Heart left ventricle (tissue), 16 donors: ENCODE measurements at regions of chr11 and their contacts with region 1.

Region 1: GRCh38 chr11:31943056-31943780 is 132.1 kb upstream of the PAX6 start:
- DNase-seq: no peak
- ATAC-seq: no peak
- H3K4me3 ChIP-seq: no peak overlapping the region
- H3K27ac ChIP-seq: no peak overlapping the region
- H3K4me1 ChIP-seq: peaks cover 0 to 13% (median 1%) of the 10 kb centered on the region in 12 donors
- H3K27me3 ChIP-seq: no peaks in the 10 kb centered on the region
- CTCF ChIP-seq: no peak
- POLR2A ChIP-seq: no peak

Region 2: GRCh38 chr11:31798554-31799434 is 144.4 kb before region 1 on chr11:
- intact Hi-C with region 1: loop called in 1 of 10 experiments (anchors 5 kb)
- DNase-seq: peak in 2 of 5 donors; percentile 16 to 42
- ATAC-seq: no peak
- H3K4me3 ChIP-seq: peak overlapping the region in 1 of 12 donors; percentile 22
- H3K27ac ChIP-seq: no peak overlapping the region
- H3K4me1 ChIP-seq: peaks cover 0 to 35% (median 12%) of the 10 kb centered on the region in 12 donors
- H3K27me3 ChIP-seq: peaks cover 65 to 94% (median 86%) of the 10 kb centered on the region in 9 donors
- CTCF ChIP-seq: peak in 2 of 12 donors; percentile 23 to 25
- POLR2A ChIP-seq: no peak

Region 3: GRCh38 chr11:31903225-31904074 is 39.8 kb before region 1 on chr11:
- intact Hi-C with region 1: loop called in 1 of 10 experiments (anchors 1 kb)
- DNase-seq: peak in 4 of 5 donors; percentile 36 to 80 (median 49)
- ATAC-seq: peak; percentile 88 to 93 (median 91)
- H3K4me3 ChIP-seq: no peak overlapping the region
- H3K27ac ChIP-seq: peak overlapping the region; percentile 28 to 93 (median 80)
- H3K4me1 ChIP-seq: peaks cover 0 to 12% (median 0%) of the 10 kb centered on the region in 12 donors
- H3K27me3 ChIP-seq: no peaks in the 10 kb centered on the region
- CTCF ChIP-seq: no peak
- POLR2A ChIP-seq: no peak

Region 4: DNA sequence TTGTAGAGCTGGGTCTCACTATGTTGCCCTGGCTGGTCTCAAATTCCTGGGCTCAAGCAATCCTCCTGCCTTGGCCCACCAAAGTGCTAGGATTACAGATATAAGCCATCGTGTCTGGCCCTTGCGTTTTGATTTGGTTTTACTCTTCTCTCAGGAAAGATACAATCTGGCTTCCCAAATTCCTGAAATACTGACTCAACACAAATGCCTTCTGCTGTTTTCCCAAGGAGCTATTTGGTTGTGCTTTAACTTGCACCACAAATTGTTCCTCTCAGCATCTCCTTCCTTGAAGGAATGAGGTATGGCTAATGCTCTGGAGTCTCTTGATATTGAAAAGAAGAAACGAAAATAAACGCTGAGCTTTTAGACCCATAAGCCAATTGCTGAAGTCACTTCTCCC is 22.1 kb before region 1 on chr11:
- intact Hi-C with region 1: no loop called
- DNase-seq: no peak
- ATAC-seq: no peak
- H3K4me3 ChIP-seq: no peak overlapping the region
- H3K27ac ChIP-seq: no peak overlapping the region
- H3K4me1 ChIP-seq: no peaks in the 10 kb centered on the region
- H3K27me3 ChIP-seq: no peaks in the 10 kb centered on the region
- CTCF ChIP-seq: no peak
- POLR2A ChIP-seq: no peak

Region 5: GRCh38 chr11:31987118-31988005 is 44.1 kb after region 1 on chr11:
- intact Hi-C with region 1: no loop called
- DNase-seq: no peak
- ATAC-seq: no peak
- H3K4me3 ChIP-seq: peak overlapping the region in 3 of 12 donors; percentile 4 to 22 (median 11)
- H3K27ac ChIP-seq: no peak overlapping the region
- H3K4me1 ChIP-seq: peaks cover 0 to 5% (median 0%) of the 10 kb centered on the region in 12 donors
- H3K27me3 ChIP-seq: peaks cover 18 to 50% (median 25%) of the 10 kb centered on the region in 9 donors
- CTCF ChIP-seq: no peak
- POLR2A ChIP-seq: no peak